Astrocyte of the cerebellum (primary cell): ENCODE measurements at regions of chr6 and their contacts with region 1.

Region 1: DNA sequence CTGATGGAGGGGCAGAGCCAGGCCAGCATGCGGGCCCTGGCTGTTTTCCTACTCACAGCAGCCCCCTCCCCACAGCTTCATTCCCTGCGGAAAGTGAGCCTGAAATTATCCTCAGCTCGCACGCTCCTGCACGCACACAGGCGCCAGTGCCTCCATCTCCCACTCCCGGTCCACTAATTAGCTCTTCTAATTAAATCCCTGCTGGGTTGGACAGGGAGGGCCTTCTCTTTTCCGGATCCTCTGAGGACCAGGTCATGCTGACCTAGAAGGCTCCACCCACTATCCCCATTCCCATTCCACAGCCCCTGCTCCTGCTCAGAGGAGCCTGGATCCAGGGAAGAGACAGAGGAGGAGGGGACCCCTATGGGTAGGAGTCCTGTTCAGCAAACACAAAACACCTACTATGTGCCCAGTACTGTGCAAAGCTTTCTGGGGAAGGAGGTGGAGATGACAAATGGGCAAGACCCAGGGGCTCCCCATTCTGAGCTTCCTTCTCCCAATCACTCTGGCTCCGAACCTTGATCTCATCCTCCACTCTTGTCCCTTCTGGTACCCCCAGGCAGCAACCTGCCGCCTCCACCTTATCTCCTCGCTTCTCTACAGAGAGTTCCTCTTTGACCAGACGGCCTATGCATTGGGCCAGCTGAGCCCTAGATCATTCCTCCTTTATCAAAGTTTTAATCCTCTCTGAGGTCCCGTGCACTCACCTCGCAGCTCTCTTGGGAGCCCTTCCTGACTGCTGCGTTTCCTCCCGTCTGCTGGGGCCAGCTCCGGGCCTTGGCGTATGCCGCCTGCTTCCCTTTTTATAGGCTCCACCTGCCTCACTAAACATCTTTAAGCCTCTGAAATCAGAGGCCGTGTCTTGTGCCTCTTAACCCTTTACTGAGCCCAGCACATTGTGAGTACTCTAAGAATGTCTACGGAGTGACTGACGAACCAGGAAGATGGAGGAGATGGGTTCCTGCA is 70.4 kb upstream of the CCDC167 start:
- DNase-seq: no peak
- H3K4me3 ChIP-seq: no peak overlapping the region
- CTCF ChIP-seq: no peak

Region 2: GRCh38 chr6:37525460-37526357 is 44.4 kb before region 1 on chr6:
- in situ Hi-C with region 1: loop called (anchors 5 kb)
- DNase-seq: no peak
- H3K4me3 ChIP-seq: no peak overlapping the region
- CTCF ChIP-seq: no peak

Region 3: GRCh38 chr6:37615564-37616340 is 45.7 kb after region 1 on chr6:
- in situ Hi-C with region 1: loop called (anchors 5 kb)
- DNase-seq: peak; percentile 63
- H3K4me3 ChIP-seq: no peak overlapping the region
- CTCF ChIP-seq: no peak